Psoas muscle (tissue), 8 donors: ENCODE measurements at regions of chr6 and their contacts with region 1.

Region 1: DNA sequence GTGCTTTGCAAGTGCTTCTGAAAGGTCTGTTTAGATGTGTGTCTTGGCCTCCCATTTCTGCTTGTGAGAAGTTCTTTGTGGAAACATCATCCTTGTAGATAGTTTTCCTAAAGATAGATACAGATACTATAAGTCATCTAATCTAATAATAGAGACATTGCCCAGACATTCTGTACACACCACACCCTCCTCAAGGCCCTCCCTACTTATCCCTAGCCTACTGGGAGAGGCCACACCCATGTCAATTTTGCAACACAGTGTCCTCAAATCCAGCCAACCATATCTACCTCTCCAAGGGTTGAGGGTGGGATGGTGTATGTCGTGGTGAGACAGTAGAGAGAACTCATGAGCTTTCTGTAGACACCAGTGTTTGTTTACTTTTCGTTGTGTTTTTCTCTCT is 6.2 kb downstream of the KDM1B start:
- DNase-seq: no peak
- ATAC-seq: peak; percentile 61 to 97 (median 96)
- H3K4me3 ChIP-seq: no peak overlapping the region
- H3K27ac ChIP-seq: peak overlapping the region; percentile 70
- H3K4me1 ChIP-seq: peaks cover 6% of the 10 kb centered on the region
- H3K27me3 ChIP-seq: no peaks in the 10 kb centered on the region
- CTCF ChIP-seq: no peak

Region 2: DNA sequence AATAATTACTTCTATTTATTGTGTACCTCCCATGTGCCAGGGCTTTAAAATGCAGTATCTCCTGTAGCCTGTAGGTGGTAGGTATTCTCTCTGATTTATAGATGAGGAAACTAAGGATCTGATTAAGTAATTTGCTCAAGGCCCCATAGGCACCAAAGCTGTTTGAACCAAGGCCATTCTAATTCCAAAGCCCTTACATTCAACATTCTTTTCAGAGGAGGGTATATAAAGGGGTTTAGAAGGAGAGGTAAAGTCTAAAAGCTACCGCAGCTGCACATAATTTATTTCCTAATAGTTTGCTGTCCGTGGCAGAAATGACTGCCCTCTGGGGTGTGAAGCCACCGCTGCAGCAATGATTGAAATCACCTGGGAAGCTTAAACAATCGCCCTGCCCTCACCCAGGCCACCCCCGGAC is 656.4 kb before region 1 on chr6:
- intact Hi-C with region 1: no loop called
- DNase-seq: no peak
- ATAC-seq: peak; percentile 38 to 46 (median 40)
- H3K4me3 ChIP-seq: no peak overlapping the region
- H3K27ac ChIP-seq: peak overlapping the region; percentile 56
- H3K4me1 ChIP-seq: peaks cover 16% of the 10 kb centered on the region
- H3K27me3 ChIP-seq: no peaks in the 10 kb centered on the region
- CTCF ChIP-seq: peak; percentile 17

Region 3: DNA sequence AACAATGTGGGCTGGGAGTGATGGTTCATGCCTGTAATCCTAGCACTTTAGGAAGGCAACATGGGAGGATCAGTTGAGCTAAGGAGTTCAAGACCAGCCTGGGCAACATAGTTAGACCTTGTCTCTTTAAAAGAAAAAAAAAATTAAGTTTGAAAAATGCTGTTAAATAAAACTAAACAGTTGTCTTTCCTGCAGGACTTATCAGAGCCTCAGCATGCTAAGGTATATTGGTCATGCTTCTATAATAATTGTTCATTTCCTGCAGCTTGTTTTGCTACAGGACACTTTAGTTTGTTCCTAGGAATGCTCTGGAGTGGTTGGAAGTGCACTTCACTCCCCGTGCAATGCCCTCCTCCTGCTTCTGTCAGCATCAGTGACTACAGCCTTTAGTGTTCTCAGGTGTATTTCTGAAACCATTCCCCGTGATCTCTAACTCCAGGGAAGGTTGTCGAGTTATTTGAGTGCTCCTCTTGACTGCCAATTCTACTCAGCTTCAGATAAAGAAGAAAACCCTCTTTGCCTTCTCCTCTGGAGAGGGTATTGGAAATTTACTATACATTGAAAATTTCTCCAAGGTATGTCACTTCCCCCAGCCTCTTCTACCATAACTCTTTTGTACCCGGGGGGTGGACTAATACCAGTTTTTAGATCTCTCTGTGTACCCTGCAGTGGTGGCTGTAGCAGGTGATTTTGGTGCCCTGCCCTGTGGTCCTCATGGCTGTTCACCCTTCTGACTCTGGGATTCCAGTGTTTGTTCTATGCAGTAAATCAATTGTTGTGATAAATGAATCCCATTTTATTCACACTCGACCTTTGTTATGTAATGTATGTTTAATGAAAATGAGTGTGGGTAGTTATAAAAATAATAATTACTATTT is 72.8 kb before region 1 on chr6:
- intact Hi-C with region 1: no loop called
- DNase-seq: no peak
- ATAC-seq: no peak
- H3K4me3 ChIP-seq: no peak overlapping the region
- H3K27ac ChIP-seq: no peak overlapping the region
- H3K4me1 ChIP-seq: no peaks in the 10 kb centered on the region
- H3K27me3 ChIP-seq: no peaks in the 10 kb centered on the region
- CTCF ChIP-seq: no peak

Region 4: GRCh38 chr6:18221288-18221615 is 59.8 kb after region 1 on chr6:
- intact Hi-C with region 1: loop called in 1 of 2 experiments (anchors 5 kb)
- DNase-seq: no peak
- ATAC-seq: no peak
- H3K4me3 ChIP-seq: no peak overlapping the region
- H3K27ac ChIP-seq: no peak overlapping the region
- H3K4me1 ChIP-seq: no peaks in the 10 kb centered on the region
- H3K27me3 ChIP-seq: no peaks in the 10 kb centered on the region
- CTCF ChIP-seq: no peak